K562 (cell line): ENCODE measurements at regions of chr3 and their contacts with region 1.

Region 1: DNA sequence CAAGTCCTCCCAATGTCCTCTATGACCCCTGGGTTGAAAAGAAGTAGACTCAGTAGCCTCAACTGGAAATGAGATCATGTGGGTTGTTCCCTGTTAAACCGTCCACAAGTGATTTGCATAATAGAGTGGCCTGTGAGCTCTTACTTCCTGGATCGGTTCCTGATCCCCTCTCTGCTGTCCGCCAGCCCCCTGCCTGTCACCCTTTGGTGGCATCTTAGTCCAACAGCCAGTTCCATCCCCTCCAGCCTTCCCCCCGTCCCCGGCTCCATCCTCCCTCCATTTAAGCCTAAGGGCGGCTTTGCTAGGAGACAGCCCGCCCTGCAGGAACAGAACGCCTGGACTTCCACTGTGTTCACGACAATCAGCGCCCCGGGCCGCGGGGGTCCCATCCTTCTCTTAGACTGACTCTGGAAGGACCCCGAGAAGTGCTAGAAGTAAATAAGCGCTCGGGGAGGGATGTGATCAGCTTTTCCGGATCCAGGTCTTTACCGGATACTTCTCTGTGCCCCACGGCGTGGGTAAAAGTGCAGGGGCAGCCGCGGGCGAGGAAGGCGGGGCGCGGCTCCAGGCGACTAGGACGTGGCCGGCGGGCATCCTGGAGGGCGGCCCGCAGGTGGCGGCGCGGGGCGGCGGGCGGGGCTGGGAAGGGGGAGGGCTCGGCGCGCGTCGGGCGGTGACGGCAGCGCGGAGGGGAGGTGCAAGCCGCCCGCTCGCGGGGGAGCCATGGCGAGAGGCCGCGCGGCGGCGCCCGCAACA is 51.2 kb upstream of the ULK4 start:
- DNase-seq: peak; percentile 87 to 96 (median 94)
- ATAC-seq: peak; percentile 90
- H3K4me3 ChIP-seq: peak overlapping the region; percentile 85
- H3K27ac ChIP-seq: peak overlapping the region; percentile 87
- H3K4me1 ChIP-seq: peaks cover 16 to 21% of the 10 kb centered on the region in 2 experiments
- H3K27me3 ChIP-seq: no peaks in the 10 kb centered on the region; a peak in 1 of 5 replicates
- CTCF ChIP-seq: peak in 2 of 3 experiments; percentile 18 to 24; a peak in 2 of 6 replicates
- EP300 ChIP-seq: peak; percentile 52; the same call in 1 of the 2 replicates
- POLR2A ChIP-seq: peak; percentile 68
- RAD21 ChIP-seq: 0 out of 4 replicates have a peak, but pooled peaks of 1 of the 2 experiments have one; percentile 6

Region 2: DNA sequence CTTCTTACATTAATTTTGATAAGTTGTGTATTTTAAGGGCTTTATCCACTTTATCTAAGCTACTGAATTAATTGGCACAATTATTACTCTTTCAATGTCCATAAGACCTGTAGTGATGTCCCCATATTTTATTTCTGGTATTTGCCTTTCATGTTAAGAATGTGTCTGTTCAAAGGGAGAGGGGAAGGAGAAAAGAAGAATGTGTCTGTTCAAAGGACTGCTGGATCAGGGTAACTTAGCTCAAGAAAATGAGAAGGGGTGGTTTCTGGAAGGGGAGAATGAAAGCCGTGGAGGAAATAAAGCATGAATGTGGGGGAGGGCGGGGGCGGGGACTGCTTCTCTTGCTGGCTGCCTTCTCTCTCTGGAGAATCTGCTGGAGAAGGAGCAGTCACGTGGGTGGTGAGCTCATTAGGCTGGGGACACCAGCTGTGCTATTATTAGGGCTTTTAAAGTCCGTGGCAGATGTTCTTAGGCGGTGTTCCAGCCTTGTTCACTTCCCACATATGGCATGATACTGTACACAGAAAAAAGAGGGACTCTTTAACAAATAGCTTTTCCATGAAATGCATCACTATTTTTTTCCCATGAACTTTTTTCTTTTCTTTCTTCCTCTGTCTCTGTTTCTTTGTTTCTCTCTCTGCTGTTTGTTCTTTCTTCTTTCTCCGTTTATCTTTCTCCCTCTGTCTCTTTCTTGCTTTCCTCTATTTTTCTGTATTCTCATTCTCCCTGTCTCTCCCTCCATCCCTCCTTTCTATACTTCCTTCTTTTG is 12.4 kb after region 1 on chr3:
- CTCF ChIA-PET with region 1: no interaction called
- POLR2A ChIA-PET with region 1: interaction called, 27 read pairs
- in situ Hi-C with region 1: no loop called
- intact Hi-C with region 1: no loop called
- DNase-seq: peak; percentile 85 to 94 (median 88)
- ATAC-seq: peak; percentile 86
- H3K4me3 ChIP-seq: no peak overlapping the region; the same call in 1 of the 2 replicates
- H3K27ac ChIP-seq: peak overlapping the region; percentile 53
- H3K4me1 ChIP-seq: peaks cover 21 to 28% of the 10 kb centered on the region in 2 experiments
- H3K27me3 ChIP-seq: no peaks in the 10 kb centered on the region
- CTCF ChIP-seq: no peak
- EP300 ChIP-seq: peak; percentile 31
- POLR2A ChIP-seq: 0 out of 2 replicates have a peak, but pooled peaks have one; percentile 29
- RAD21 ChIP-seq: peak in 1 of 2 experiments; percentile 13; a peak in 1 of 4 replicates

Region 3: GRCh38 chr3:42032693-42033349 is 19.7 kb after region 1 on chr3:
- CTCF ChIA-PET with region 1: no interaction called
- POLR2A ChIA-PET with region 1: interaction called, 17 read pairs
- in situ Hi-C with region 1: no loop called
- intact Hi-C with region 1: no loop called
- DNase-seq: peak in 1 of 4 experiments; percentile 55
- ATAC-seq: peak; percentile 69
- H3K4me3 ChIP-seq: no peak overlapping the region
- H3K27ac ChIP-seq: no peak overlapping the region
- H3K4me1 ChIP-seq: peaks cover 16 to 18% of the 10 kb centered on the region in 2 experiments; a peak in 4 of 5 replicates
- H3K27me3 ChIP-seq: no peaks in the 10 kb centered on the region
- CTCF ChIP-seq: no peak
- EP300 ChIP-seq: no peak
- POLR2A ChIP-seq: no peak
- RAD21 ChIP-seq: no peak; a peak in 1 of 4 replicates